Panc1 (cell line): ENCODE measurements at regions of chr2 and their contacts with region 1.

Region 1: GRCh38 chr2:223566396-223566795 is 35.8 kb downstream of the SCG2 start:
- DNase-seq: no peak
- ATAC-seq: no peak
- H3K4me3 ChIP-seq: no peak overlapping the region
- H3K27ac ChIP-seq: peak overlapping the region; percentile 8; the same call in 1 of the 2 replicates
- H3K4me1 ChIP-seq: peaks cover 15% of the 10 kb centered on the region
- H3K27me3 ChIP-seq: no peaks in the 10 kb centered on the region
- CTCF ChIP-seq: no peak

Region 2: GRCh38 chr2:222465746-222466145 is 1100.7 kb before region 1 on chr2:
- CTCF ChIA-PET with region 1: interaction called, 10 read pairs
- POLR2A ChIA-PET with region 1: no interaction called
- in situ Hi-C with region 1: no loop called
- intact Hi-C with region 1: no loop called
- DNase-seq: no peak
- ATAC-seq: no peak
- H3K4me3 ChIP-seq: no peak overlapping the region
- H3K27ac ChIP-seq: no peak overlapping the region
- H3K4me1 ChIP-seq: no peaks in the 10 kb centered on the region
- H3K27me3 ChIP-seq: no peaks in the 10 kb centered on the region
- CTCF ChIP-seq: no peak

Region 3: DNA sequence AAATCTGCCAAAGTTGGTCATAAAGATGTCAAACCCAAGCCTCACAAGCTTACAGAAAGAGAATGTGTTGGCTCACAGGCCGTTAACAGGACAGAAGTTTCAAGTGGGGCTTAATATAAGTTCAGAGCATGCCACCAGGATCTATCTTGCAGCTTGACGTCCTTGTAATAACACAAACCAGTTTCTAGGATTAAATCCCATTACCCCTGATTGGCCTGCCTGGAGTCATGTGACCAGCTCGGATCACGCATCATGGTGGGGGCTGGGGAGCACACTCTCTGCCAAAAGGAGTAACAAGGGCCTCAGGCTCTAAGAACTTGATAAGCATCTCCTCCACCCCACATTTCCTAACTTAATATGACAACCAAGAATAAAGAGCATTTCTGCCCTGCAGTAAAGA is 74.7 kb after region 1 on chr2:
- CTCF ChIA-PET with region 1: no interaction called
- POLR2A ChIA-PET with region 1: interaction called, 13 read pairs
- in situ Hi-C with region 1: no loop called
- intact Hi-C with region 1: no loop called
- DNase-seq: no peak
- ATAC-seq: 0 out of 2 replicates have a peak, but pooled peaks have one; percentile 30
- H3K4me3 ChIP-seq: no peak overlapping the region
- H3K27ac ChIP-seq: no peak overlapping the region; the same call in 1 of the 2 replicates
- H3K4me1 ChIP-seq: 0 out of 2 replicates have a peak, but pooled peaks cover 7% of the 10 kb centered on the region
- H3K27me3 ChIP-seq: no peaks in the 10 kb centered on the region
- CTCF ChIP-seq: no peak